CD8-positive, alpha-beta memory T cell (primary cell): ENCODE measurements at regions of chr2 and their contacts with region 1.

Region 1: DNA sequence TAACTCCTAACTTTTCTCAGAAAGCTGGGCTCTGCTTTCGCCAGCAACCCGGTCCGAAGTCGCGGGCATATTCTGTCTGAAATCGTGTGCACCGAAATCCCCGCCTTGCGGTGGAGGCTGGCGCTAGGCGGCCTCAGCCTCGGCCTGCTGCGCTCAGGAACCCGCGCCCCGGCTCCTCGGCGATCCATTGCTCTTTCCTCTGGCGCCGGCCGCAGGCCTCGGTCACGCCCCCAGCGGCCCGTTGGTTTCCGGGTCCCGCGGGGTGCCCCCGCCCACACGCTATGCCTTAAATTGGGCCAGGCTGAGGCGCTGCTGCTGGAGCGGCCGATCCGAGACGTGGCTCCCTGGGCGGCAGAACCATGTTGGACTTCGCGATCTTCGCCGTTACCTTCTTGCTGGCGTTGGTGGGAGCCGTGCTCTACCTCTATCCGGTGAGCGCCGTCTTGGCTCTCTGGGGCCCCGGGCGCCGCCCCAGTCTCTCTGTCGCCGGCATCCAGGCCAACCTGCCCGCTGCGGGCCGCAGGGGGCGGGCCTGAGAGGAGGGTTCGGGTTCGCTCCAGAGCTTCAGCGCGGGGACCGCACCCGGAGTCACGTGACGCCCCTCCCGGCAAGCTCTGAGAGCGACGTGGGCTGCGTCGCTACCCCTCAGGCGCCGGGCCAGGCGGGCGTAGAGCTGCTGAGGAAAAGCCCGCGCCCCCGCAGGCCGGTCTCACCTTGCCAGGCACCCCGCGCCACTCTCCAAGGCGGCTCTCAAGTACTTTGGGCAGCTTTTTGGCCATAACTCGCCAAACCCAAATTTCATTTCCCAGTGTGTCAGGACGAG is at the start of gene CYP20A1:
- DNase-seq: peak; percentile 94 to 99 (median 97)
- H3K4me3 ChIP-seq: peak within 1 kb of the TSS; percentile 99
- H3K4me3 Mint-ChIP-seq: peak within 1 kb of the TSS; percentile 89 to 100 (median 98)
- H3K27ac ChIP-seq: peak within 1 kb of the TSS; percentile 96
- H3K27ac Mint-ChIP-seq: peak within 1 kb of the TSS; percentile 95 to 100 (median 99)
- H3K4me1 ChIP-seq: peaks cover 23% of the 10 kb centered on the region
- H3K4me1 Mint-ChIP-seq: peaks cover 31 to 43% (median 31%) of the 10 kb centered on the region in 3 donors
- H3K27me3 ChIP-seq: no peaks in the 10 kb centered on the region
- H3K27me3 Mint-ChIP-seq: peaks cover 0 to 6% of the 10 kb centered on the region in 2 donors
- total RNA-seq, gene CYP20A1: 28.5 to 28.6 TPM

Region 2: DNA sequence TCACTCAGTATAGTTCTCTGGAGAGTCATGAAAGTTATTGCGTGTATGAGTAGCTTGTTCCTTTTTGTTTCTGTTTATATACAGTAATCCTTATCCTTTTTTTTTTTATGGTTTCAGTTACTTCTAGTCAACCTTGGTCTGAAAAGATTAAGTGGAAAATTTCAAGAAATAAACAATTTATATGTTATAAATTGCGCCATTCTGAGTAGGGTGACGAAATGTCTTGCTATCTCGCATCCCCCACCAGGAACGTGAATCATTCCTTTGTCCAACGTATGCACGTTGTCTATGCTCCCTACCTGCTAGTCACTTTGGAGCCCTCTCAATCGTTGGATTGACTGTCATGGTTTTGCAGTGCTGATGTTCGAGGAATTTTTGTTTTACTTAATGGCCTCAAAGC is 543.7 kb before region 1 on chr2:
- CTCF ChIA-PET with region 1: no interaction called
- POLR2A ChIA-PET with region 1: no interaction called
- DNase-seq: no peak
- H3K4me3 ChIP-seq: no peak overlapping the region
- H3K4me3 Mint-ChIP-seq: no peak overlapping the region
- H3K27ac ChIP-seq: no peak overlapping the region
- H3K27ac Mint-ChIP-seq: peak overlapping the region in 1 of 8 donors; percentile 54
- H3K4me1 ChIP-seq: peaks cover 22% of the 10 kb centered on the region
- H3K4me1 Mint-ChIP-seq: peaks cover 31 to 51% (median 33%) of the 10 kb centered on the region in 3 donors
- H3K27me3 ChIP-seq: no peaks in the 10 kb centered on the region
- H3K27me3 Mint-ChIP-seq: peaks cover 0 to 2% of the 10 kb centered on the region in 2 donors

Region 3: DNA sequence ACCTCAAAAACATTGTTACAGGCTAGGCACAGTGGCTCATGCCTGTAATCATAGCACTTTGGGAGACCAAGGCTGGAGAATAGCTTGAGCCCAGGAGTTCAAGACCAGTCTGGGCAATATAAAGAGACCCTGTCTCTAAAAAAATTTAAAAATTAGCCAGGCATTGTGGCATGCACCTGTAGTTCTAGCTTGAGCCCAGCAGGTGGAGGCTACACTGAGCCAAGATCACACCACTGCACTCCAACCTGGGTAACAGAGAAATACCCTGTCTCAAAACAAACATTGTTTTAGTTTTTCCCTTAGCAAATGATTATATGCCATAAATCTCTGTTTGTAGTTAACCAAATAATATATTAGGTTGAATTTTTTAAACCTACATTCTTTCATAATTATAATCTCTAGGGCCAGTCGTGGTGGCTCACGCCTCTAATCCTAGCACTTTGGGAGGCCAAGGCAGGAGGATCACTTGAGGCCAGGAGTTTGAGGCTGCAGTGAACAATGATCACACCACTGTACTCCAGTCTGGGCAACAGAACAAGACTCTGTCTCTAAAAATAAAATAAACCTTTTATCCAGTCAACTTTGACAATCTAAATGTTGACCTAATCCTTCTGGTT is 13.4 kb before region 1 on chr2:
- CTCF ChIA-PET with region 1: interaction called, 19 read pairs
- POLR2A ChIA-PET with region 1: interaction called, 3 read pairs
- DNase-seq: peak; percentile 5 to 52 (median 15)
- H3K4me3 ChIP-seq: no peak overlapping the region
- H3K4me3 Mint-ChIP-seq: no peak overlapping the region
- H3K27ac ChIP-seq: no peak overlapping the region
- H3K27ac Mint-ChIP-seq: no peak overlapping the region
- H3K4me1 ChIP-seq: no peaks in the 10 kb centered on the region
- H3K4me1 Mint-ChIP-seq: no peaks in the 10 kb centered on the region
- H3K27me3 ChIP-seq: no peaks in the 10 kb centered on the region
- H3K27me3 Mint-ChIP-seq: no peaks in the 10 kb centered on the region